ENCODE measurements at regions of chr17 and their contacts with region 1.

Region 1: DNA sequence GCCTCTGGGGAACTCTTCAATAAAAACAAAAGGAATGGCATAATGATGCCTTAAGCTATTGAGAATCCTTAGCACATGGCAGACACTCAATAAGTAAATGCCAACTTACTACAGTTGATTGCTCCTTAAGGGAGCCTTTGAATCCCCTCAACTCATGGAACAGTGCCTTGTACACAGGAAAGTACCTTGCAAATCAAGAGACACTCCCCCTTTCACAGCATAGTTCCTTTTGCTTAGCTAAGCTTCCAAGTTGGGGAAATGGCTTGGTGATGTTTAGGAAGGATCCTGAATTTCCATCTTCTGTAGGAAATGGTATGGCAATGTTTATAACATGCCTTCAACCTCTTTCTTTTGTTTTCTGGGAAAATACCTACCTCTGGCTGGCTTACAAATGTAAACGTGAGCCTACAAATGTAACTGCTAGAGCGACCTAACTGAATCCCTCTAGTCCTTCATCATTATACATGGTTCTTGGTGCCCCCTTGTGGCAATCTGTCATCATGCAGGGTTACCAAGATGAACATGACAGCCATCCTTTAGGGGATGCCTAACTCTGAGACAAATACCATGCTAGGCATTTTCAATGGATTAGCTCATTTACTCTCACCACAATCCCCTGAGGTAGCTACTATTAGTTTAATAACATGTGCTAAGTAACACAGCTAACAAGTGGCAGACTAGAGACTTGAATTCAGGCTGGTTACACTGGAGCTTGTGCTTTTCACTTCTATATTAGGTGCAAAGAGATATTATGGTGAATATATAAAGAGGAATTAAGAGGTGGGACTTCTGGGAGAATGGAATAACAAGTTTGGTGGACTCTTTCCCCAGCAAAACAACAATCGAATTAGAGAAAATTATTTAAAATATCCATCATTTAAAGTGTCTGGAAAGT is 65.0 kb downstream of the MMD start:
- DNase-seq: peak; percentile 78
- H3K4me3 Mint-ChIP-seq: no peak overlapping the region
- H3K27ac Mint-ChIP-seq: no peak overlapping the region
- H3K4me1 Mint-ChIP-seq: peaks cover 2% of the 10 kb centered on the region
- H3K27me3 Mint-ChIP-seq: peaks cover 15% of the 10 kb centered on the region

Region 2: DNA sequence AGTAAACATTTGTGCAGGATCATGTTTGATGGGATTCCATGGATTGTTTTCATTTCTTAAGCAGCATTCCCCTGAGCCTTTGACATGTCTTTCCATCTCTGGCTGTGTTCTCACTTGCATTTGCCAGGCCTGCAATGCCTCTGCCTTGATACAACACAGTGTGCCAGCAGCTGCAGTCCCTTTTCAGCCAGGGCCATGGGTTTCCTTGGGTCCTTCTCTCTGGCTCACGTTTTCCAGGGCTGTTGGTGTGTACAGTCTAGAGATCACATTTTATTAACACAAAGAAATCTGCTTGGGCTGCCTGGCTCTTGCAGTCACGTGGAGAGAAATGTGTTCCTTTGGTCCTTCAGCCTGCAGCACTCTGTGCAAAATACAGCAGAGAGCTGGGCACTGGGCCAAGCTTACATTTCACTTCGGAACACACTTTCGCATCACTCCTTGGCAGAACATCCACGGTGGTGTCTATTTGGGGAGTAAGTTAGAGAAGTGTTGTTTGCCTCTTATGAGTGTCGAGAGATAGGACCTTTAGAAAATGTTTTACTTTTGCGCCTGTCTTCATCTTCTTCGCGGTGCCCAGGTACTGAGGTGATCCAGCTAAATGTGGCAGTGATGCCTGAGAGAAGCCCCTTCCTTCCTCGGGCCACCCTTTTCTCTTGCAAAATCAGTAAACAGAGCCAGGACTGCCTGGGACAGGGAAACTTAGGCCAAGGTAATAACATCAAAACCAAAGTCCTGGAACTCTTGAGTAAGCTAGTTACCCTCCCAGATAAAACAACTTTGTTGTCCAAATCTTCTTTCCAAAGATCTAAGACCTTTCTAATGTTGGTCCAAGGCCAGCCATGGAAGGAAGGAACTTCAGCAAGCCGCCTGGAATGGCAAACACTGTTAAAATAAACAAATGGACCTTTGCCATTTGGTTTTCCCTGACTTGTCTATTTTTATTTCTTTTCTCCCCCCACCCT is 71.1 kb before region 1 on chr17:
- CTCF ChIA-PET with region 1: no interaction called
- POLR2A ChIA-PET with region 1: no interaction called
- DNase-seq: no peak
- H3K4me3 Mint-ChIP-seq: no peak overlapping the region
- H3K27ac Mint-ChIP-seq: no peak overlapping the region
- H3K4me1 Mint-ChIP-seq: peaks cover 20% of the 10 kb centered on the region
- H3K27me3 Mint-ChIP-seq: no peaks in the 10 kb centered on the region

Region 3: DNA sequence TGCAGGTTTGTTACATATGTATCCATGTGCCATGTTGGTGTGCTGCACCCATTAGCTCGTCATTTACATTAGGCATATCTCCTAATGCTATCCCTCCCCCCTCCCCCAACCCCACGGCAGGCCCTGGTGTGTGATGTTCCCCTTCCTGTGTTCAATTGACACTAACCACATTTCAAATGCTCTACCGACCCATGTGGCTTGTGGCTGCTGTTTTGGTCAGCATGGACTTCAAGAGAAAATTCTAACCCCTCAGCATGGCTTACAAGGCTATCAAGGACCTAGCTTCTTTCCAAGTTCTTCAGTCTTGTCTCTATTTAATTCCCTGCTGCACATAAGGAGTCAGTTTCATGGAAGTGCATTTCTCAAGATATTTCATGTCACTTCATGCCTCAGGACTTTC is 12.0 kb after region 1 on chr17:
- CTCF ChIA-PET with region 1: interaction called, 10 read pairs
- POLR2A ChIA-PET with region 1: no interaction called
- DNase-seq: peak; percentile 21
- H3K4me3 Mint-ChIP-seq: no peak overlapping the region
- H3K27ac Mint-ChIP-seq: no peak overlapping the region
- H3K4me1 Mint-ChIP-seq: peaks cover 5% of the 10 kb centered on the region
- H3K27me3 Mint-ChIP-seq: peaks cover 6% of the 10 kb centered on the region

Region 4: GRCh38 chr17:55513885-55514591 is 157.4 kb after region 1 on chr17:
- CTCF ChIA-PET with region 1: interaction called, 11 read pairs
- POLR2A ChIA-PET with region 1: no interaction called
- DNase-seq: peak; percentile 67
- H3K4me3 Mint-ChIP-seq: no peak overlapping the region
- H3K27ac Mint-ChIP-seq: no peak overlapping the region
- H3K4me1 Mint-ChIP-seq: peaks cover 17% of the 10 kb centered on the region
- H3K27me3 Mint-ChIP-seq: peaks cover 14% of the 10 kb centered on the region